Activated naive CD4-positive, alpha-beta T cell treated with anti-CD3 and anti-CD28 coated beads for 36 hours (primary cell): ENCODE measurements at regions of chr1 and their contacts with region 1.

Region 1: DNA sequence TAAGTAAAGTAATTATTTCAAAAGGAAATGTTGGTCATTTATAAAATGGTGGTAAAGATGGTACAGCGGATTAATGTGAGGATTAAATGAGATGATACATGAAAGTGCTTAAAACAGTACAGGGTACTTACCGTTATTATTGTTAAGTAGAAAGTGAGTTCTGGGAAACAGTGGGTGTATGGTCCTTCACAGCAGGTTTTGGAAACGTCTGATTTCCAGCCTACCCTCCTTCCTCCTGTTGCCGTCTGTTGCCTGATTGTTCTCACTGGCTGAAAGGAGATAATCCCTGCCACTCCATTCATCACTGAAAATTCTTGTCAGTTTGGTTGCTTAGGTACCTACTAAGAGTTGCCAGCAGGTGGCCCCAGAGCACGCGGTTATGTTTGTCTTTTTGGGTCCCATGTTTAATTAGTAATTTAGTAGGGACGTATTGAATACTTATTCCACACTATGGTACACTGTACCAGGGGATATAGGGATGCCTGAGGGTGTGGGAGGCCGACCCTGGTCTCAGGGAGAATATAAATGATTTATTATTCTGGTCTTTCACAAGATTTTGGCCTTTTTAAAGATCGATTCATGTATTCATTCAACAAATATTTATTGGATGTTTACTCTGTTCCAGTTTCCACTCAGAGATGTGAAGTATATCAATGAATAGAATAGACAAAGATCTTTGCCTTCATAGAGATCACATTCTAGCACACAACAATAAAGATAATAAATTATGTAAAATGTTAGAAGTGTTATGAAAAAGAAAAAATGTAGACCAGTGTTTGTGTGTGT is 30.8 kb upstream of the RPTN start:
- DNase-seq: peak; percentile 84
- H3K4me3 Mint-ChIP-seq: peak overlapping the region; percentile 66
- H3K27ac Mint-ChIP-seq: no peak overlapping the region
- H3K4me1 Mint-ChIP-seq: peaks cover 6% of the 10 kb centered on the region
- H3K27me3 Mint-ChIP-seq: peaks cover 4% of the 10 kb centered on the region

Region 2: GRCh38 chr1:151934048-151934493 is 255.8 kb before region 1 on chr1:
- CTCF ChIA-PET with region 1: no interaction called
- intact Hi-C with region 1: loop called (anchors 2 kb)
- DNase-seq: peak; percentile 64
- H3K4me3 Mint-ChIP-seq: no peak overlapping the region
- H3K27ac Mint-ChIP-seq: no peak overlapping the region
- H3K4me1 Mint-ChIP-seq: no peaks in the 10 kb centered on the region
- H3K27me3 Mint-ChIP-seq: peaks cover 3% of the 10 kb centered on the region

Region 3: DNA sequence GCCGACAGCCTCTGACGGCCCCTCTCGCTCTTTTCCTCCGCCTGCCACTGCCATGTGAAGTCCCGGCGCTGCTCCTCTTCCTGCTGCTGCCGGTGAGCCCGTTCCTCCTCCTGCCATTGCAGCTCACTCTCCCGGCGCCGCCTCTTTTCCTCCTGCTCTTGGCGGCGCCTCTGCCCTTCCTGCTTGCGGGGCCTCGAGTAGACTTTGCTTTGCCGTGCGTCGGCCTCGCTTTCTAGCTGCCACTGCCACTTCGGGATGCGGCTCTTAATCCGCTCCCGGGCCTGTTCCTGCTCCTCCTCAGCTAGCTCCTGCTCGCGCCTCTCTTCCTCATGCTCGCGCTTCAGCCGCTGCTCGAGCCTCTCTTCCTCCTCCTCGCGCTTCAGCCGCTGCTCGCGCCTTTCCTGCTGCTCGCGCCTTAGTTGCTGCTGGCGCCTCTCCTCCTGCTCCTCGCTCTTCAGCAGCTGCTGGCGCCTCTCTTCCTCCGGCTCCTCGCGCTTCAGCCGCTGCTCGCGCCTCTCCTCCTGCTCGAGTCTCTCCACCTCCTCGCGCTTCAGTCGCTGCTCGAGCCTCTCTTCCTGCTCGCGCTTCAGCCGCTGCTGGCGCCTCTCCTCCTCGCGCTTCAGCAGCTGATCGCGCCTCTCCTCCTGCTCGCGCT is 78.9 kb before region 1 on chr1:
- CTCF ChIA-PET with region 1: interaction called, 26 read pairs
- intact Hi-C with region 1: loop called (anchors 2 kb)
- DNase-seq: peak; percentile 49
- H3K4me3 Mint-ChIP-seq: no peak overlapping the region
- H3K27ac Mint-ChIP-seq: no peak overlapping the region
- H3K4me1 Mint-ChIP-seq: peaks cover 4% of the 10 kb centered on the region
- H3K27me3 Mint-ChIP-seq: peaks cover 17% of the 10 kb centered on the region

Region 4: DNA sequence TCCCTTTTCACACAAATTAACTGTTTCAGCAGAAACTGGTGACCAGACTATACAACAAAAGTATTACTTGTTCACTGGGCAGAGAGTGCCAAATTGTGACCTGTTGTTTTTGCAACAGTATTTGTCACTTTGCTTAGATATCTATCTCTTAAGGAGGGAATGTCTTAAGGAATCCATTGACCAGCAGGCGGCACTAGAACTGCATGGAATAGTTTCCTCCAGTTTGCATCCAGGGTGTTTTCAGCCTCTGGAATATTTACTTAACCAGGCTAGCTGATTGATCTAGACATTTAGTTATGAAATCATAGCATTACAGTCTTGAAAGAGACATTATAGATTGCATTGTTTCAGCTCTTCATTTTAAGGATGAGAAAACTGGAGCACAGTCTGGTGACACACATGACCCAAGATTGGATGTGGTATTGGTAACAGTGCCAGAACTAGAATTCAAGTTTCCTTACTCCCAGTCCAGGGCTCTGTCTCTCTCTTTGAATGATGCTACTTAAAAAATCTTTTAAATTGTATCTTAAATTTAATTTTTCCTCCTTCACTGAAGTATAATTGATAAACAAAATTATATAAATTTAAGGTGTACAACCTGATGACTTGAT is 47.8 kb before region 1 on chr1:
- CTCF ChIA-PET with region 1: interaction called, 7 read pairs
- intact Hi-C with region 1: loop called (anchors 1 kb)
- DNase-seq: peak; percentile 62
- H3K4me3 Mint-ChIP-seq: no peak overlapping the region
- H3K27ac Mint-ChIP-seq: no peak overlapping the region
- H3K4me1 Mint-ChIP-seq: peaks cover 9% of the 10 kb centered on the region
- H3K27me3 Mint-ChIP-seq: peaks cover 50% of the 10 kb centered on the region

Region 5: DNA sequence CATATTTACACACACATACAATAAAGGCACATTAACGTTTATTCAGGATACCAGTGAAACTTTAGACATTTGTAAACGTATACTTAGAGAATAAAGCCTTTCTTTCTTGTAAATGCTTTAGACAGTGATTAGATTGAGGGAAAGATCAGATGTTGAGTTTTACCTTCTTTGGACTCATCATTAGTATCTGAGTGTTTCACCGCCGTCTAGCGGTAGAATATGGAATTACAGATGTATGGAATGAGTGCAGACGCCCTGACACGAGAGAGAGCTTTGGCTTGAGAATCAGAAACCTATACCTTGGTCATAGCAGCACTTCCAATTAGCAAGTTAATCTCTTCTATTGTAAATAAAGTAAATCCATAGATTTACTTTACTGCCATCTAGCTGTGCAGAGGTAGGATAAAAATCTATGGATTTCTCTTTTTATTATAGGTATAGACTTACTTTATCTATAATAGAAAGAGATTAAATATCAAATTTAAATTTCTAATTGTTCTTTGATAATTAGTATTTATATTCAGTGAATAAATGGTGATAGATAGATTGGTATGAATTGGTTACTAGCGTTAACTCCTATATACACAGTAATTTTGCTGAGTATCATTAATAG is 157.4 kb after region 1 on chr1:
- CTCF ChIA-PET with region 1: interaction called, 9 read pairs
- intact Hi-C with region 1: loop called (anchors 1 kb)
- DNase-seq: peak; percentile 72
- H3K4me3 Mint-ChIP-seq: no peak overlapping the region
- H3K27ac Mint-ChIP-seq: no peak overlapping the region
- H3K4me1 Mint-ChIP-seq: peaks cover 7% of the 10 kb centered on the region
- H3K27me3 Mint-ChIP-seq: peaks cover 21% of the 10 kb centered on the region

Region 6: GRCh38 chr1:152440635-152441471 is 251.0 kb after region 1 on chr1:
- CTCF ChIA-PET with region 1: interaction called, 28 read pairs
- intact Hi-C with region 1: loop called (anchors 1 kb)
- DNase-seq: peak; percentile 82
- H3K4me3 Mint-ChIP-seq: no peak overlapping the region
- H3K27ac Mint-ChIP-seq: no peak overlapping the region
- H3K4me1 Mint-ChIP-seq: no peaks in the 10 kb centered on the region
- H3K27me3 Mint-ChIP-seq: peaks cover 17% of the 10 kb centered on the region

Region 7: DNA sequence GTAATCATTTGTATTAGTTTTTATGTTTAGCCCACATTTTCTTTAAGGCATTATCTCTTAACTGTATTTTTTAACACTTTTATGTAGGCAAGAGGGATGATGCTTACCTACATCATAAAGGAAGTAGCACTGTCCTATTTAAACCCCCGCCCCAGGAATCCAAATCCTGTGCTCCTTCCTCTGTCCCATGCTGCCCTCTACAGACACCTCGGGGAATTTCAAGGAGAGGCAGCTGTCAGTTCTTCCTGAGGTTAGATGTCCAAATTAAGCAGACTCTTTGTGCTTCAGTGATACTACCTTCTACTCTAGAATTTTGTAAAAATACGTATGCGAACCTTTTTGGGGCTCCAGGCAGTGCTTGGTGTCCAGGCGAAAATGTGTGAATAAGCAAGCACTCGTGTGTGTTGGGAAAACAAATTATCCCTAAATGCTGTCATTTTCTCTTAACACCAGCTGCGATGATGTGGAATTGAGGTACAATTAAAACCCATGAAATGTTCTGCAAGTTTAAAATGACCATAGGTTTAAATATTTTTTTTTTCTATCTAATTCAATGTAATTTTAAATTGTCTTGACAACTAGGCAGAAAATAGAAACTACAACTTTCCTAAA is 343.6 kb after region 1 on chr1:
- CTCF ChIA-PET with region 1: no interaction called
- intact Hi-C with region 1: loop called (anchors 5 kb)
- DNase-seq: peak; percentile 66
- H3K4me3 Mint-ChIP-seq: no peak overlapping the region
- H3K27ac Mint-ChIP-seq: no peak overlapping the region
- H3K4me1 Mint-ChIP-seq: no peaks in the 10 kb centered on the region
- H3K27me3 Mint-ChIP-seq: peaks cover 35% of the 10 kb centered on the region